WTC11 (cell line): ENCODE measurements at regions of chr17 and their contacts with region 1.

Region 1: DNA sequence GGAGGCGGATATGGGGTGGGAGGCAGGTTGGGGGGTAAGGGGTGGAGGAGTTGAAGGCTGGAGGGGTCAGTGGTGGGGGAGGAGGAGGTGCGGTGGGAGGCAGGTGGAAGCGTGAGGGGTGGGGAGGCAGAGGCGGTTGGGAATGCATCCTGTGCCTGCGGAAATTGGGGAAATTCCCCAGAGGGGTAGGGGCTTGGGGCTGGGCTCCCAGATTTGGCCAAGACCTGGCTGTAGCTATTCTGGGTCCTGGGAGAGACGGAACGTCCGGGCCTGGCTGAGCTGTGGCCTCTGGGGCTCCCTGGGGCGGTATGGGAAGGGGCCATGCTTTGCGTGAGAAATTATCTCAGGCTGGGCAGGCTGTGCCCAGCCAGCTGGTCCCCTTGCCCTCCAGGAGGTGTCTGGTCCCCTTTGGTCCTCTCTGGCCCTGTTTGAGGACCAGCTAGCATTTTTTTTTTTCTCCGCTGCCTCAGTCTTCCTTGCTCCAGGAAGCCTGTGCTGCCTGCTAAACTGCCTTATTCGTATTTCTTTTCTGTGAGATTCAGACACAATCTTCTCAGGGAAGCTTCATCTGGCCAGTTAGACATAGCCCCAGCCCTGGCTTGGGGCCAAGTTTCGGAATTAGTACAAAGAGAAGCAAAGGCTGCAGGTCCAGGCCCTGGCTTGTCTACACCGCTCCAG is 7.3 kb upstream of the TRPV2 start:
- DNase-seq: peak; percentile 60
- ATAC-seq: peak; percentile 50
- H3K4me3 Mint-ChIP-seq: peak overlapping the region; percentile 51
- H3K27ac Mint-ChIP-seq: peak overlapping the region; percentile 91
- H3K4me1 Mint-ChIP-seq: peaks cover 11% of the 10 kb centered on the region
- H3K27me3 Mint-ChIP-seq: peaks cover 6% of the 10 kb centered on the region; the same call in 1 of the 2 replicates
- CTCF ChIP-seq: no peak

Region 2: DNA sequence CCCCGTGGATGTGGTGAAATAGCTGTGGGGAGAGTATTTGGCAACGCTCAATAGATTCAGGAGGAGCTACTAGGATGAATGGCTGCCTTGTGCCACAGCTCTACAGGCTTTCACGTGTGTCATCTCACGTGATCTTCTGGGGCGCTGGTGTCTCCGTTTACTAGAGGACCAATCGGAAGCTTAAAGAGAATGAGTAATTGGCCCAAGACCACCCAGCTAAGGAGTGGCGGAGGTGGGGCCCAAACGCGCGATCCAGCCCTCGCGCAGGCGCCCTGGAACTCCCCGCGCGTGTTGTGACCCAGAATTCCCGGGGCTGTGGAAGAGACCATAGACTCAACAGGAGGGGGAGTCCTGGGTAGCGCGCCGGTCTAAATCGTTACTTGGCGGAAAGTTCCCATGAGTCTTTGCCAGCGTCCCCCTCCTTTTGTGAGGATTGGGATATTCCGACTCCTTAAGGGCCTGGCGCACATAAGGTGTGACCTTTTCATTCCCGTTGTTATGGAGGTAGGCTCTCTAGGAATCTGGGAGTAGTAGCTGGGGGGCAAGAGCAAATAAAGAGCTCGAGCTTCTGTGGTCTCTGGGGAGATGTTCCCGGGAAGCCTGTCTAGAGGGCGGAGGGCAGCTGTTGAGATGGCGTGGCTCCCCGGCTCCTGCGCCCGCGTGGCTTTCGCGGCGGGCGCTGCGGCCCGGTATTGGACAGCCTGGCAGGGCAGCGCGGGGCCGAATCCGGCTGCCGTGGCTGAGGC is 30.7 kb after region 1 on chr17:
- CTCF ChIA-PET with region 1: interaction called, 9 read pairs
- POLR2A ChIA-PET with region 1: interaction called, 12 read pairs
- DNase-seq: peak; percentile 95
- ATAC-seq: peak; percentile 64
- H3K4me3 Mint-ChIP-seq: peak overlapping the region; percentile 99
- H3K27ac Mint-ChIP-seq: peak overlapping the region; percentile 100
- H3K4me1 Mint-ChIP-seq: peaks cover 66% of the 10 kb centered on the region
- H3K27me3 Mint-ChIP-seq: no peaks in the 10 kb centered on the region; the same call in 1 of the 2 replicates
- CTCF ChIP-seq: no peak